PC-9 (cell line): ENCODE measurements at regions of chr2 and their contacts with region 1.

Region 1: GRCh38 chr2:200864176-200864976 is at the start of gene CLK1:
- DNase-seq: peak; percentile 79 to 83
- H3K4me3 ChIP-seq: peak within 1 kb of the TSS; percentile 87
- H3K27ac ChIP-seq: peak within 1 kb of the TSS; percentile 84
- H3K4me1 ChIP-seq: peaks cover 17% of the 10 kb centered on the region
- H3K27me3 ChIP-seq: no peaks in the 10 kb centered on the region
- CTCF ChIP-seq: no peak
- total RNA-seq, gene CLK1: 38.5 and 57.0 TPM in 2 replicates

Region 2: GRCh38 chr2:200888704-200889625 is 24.6 kb after region 1 on chr2 and contains the starts of genes NIF3L1 and PPIL3:
- CTCF ChIA-PET with region 1: interaction called, 3 read pairs
- POLR2A ChIA-PET with region 1: interaction called, 3 read pairs
- intact Hi-C with region 1: loop called (anchors 1 kb)
- DNase-seq: peak; percentile 93 to 97
- H3K4me3 ChIP-seq: peak within 1 kb of the TSS; percentile 85
- H3K27ac ChIP-seq: peak within 1 kb of the TSS; percentile 96
- H3K4me1 ChIP-seq: peaks cover 14% of the 10 kb centered on the region
- H3K27me3 ChIP-seq: no peaks in the 10 kb centered on the region
- CTCF ChIP-seq: no peak
- total RNA-seq, gene NIF3L1: 27.3 and 45.6 TPM in 2 replicates
- total RNA-seq, gene PPIL3: 41.0 and 49.0 TPM in 2 replicates

Region 3: DNA sequence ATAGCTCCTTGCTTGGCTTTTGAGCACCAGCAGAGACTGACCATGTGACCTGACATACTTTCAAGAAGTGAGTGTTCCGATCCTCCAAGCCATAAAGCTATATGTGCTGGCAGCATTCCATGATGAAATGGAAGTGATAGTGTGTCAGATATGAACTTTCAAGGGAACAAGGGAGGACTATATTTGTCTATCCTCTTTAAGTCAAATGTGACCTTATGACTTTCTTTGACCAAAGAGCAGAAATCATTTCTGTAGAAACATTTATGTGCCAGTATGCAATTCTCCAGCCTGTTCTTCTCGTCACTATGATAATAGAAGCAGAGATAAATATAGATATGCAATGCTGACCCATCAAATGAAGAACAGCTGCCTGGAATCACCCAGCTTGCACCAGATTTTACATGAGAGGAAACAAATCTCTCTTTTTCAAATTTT is 192.7 kb after region 1 on chr2:
- CTCF ChIA-PET with region 1: interaction called, 11 read pairs
- POLR2A ChIA-PET with region 1: no interaction called
- intact Hi-C with region 1: no loop called
- DNase-seq: no peak
- H3K4me3 ChIP-seq: no peak overlapping the region
- H3K27ac ChIP-seq: no peak overlapping the region
- H3K4me1 ChIP-seq: no peaks in the 10 kb centered on the region
- H3K27me3 ChIP-seq: no peaks in the 10 kb centered on the region
- CTCF ChIP-seq: no peak